IMR-90 (cell line): ENCODE measurements at regions of chr5 and their contacts with region 1.

Region 1: GRCh38 chr5:42636425-42636824 is 120.2 kb upstream of the CCDC152 start:
- DNase-seq: no peak
- ATAC-seq: no peak
- H3K4me3 ChIP-seq: no peak overlapping the region
- H3K27ac ChIP-seq: no peak overlapping the region
- H3K4me1 ChIP-seq: no peaks in the 10 kb centered on the region
- H3K27me3 ChIP-seq: no peaks in the 10 kb centered on the region
- CTCF ChIP-seq: no peak
- POLR2A ChIP-seq: no peak
- RAD21 ChIP-seq: no peak

Region 2: DNA sequence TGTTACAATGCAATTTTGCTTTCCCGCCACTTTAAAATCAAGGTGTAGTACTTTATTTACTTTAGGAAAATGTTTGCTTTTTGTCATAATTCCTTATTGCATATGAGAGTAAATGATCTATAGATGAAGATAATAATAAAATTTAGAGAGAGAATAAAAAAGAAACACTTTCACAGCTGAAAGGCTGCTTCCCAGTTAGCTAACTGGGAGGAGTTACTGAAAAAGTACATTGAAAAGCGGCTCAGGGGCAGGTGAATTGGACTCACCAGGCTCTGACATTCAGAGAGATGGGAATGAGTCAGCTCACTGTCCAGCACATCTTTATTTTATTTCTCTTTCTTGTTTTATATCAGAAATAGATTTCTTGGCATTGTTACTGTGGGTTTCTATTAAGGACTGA is 11.5 kb before region 1 on chr5:
- CTCF ChIA-PET with region 1: no interaction called
- POLR2A ChIA-PET with region 1: no interaction called
- dilution Hi-C with region 1: no loop called
- in situ Hi-C with region 1: no loop called
- intact Hi-C with region 1: loop called (anchors 1 kb)
- DNase-seq: no peak
- ATAC-seq: no peak
- H3K4me3 ChIP-seq: no peak overlapping the region
- H3K27ac ChIP-seq: no peak overlapping the region
- H3K4me1 ChIP-seq: no peaks in the 10 kb centered on the region; the same call in 1 of the 2 replicates
- H3K27me3 ChIP-seq: no peaks in the 10 kb centered on the region
- CTCF ChIP-seq: no peak
- POLR2A ChIP-seq: no peak
- RAD21 ChIP-seq: no peak

Region 3: GRCh38 chr5:43096916-43097315 is 460.5 kb after region 1 on chr5:
- CTCF ChIA-PET with region 1: no interaction called
- POLR2A ChIA-PET with region 1: no interaction called
- dilution Hi-C with region 1: no loop called
- in situ Hi-C with region 1: no loop called
- intact Hi-C with region 1: no loop called
- DNase-seq: no peak
- ATAC-seq: peak; percentile 35; the same call in 1 of the 2 replicates
- H3K4me3 ChIP-seq: no peak overlapping the region
- H3K27ac ChIP-seq: no peak overlapping the region
- H3K4me1 ChIP-seq: no peaks in the 10 kb centered on the region
- H3K27me3 ChIP-seq: no peaks in the 10 kb centered on the region
- CTCF ChIP-seq: no peak
- POLR2A ChIP-seq: no peak
- RAD21 ChIP-seq: no peak